ENCODE measurements at regions of chr14 and their contacts with region 1.

Region 1: DNA sequence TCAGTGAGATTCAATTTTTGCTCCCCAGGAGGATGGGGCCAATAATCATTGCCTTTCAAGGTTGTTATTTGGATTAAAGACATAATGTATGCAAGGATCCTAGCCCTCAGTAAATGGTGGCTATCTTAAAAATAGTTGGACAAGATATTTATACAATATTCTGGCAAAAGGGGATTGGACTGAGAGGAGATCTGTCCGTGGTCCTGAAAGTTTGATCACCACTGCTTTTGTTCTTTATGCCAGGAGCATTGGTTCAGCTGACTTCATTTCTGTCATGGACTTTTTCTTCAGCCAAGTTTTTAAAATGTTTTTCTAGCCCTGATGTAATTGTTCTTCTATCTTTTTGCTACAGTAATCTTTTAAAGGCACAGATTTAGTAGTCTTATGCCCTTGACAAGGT is 70.2 kb upstream of the TCL1A start:
- DNase-seq: peak in 1 of 9 donors; percentile 3
- ATAC-seq: no peak
- H3K4me3 ChIP-seq: no peak overlapping the region
- H3K4me3 Mint-ChIP-seq: no peak overlapping the region
- H3K27ac ChIP-seq: no peak overlapping the region
- H3K27ac Mint-ChIP-seq: no peak overlapping the region
- H3K4me1 ChIP-seq: no peaks in the 10 kb centered on the region
- H3K4me1 Mint-ChIP-seq: peaks cover 0 to 1% (median 0%) of the 10 kb centered on the region in 7 donors
- H3K27me3 ChIP-seq: no peaks in the 10 kb centered on the region
- H3K27me3 Mint-ChIP-seq: peaks cover 0 to 30% (median 20%) of the 10 kb centered on the region in 5 donors

Region 2: DNA sequence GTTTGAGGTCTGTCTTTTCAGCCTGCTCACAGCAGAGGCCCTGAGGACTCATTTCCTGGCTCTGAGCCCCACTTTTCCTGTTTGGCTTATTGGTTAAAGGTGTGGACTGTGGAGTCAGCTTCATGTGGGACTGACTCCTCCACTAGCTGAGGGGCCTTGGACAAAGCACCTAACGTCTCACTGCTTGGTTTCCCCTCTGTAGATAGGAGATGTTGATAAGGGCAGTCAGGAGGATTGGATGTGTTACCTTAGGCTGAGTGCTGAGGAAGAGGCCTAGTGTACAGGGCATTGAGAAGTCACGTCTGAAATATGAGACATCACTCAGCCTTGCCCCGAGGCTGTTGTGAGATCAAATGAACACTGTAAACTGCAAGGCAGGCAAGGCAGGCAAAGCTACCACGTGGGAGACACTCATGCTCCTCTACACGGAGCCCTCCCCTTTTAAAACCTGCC is 43.1 kb before region 1 on chr14:
- CTCF ChIA-PET with region 1: no interaction called
- POLR2A ChIA-PET with region 1: no interaction called
- intact Hi-C with region 1: no loop called
- DNase-seq: no peak
- ATAC-seq: no peak
- H3K4me3 ChIP-seq: no peak overlapping the region
- H3K4me3 Mint-ChIP-seq: no peak overlapping the region
- H3K27ac ChIP-seq: no peak overlapping the region
- H3K27ac Mint-ChIP-seq: no peak overlapping the region
- H3K4me1 ChIP-seq: peaks cover 0 to 10% of the 10 kb centered on the region in 2 donors
- H3K4me1 Mint-ChIP-seq: peaks cover 5 to 17% (median 11%) of the 10 kb centered on the region in 7 donors
- H3K27me3 ChIP-seq: no peaks in the 10 kb centered on the region
- H3K27me3 Mint-ChIP-seq: peaks cover 0 to 8% (median 0%) of the 10 kb centered on the region in 5 donors

Region 3: GRCh38 chr14:95814363-95815225 is 30.5 kb after region 1 on chr14:
- CTCF ChIA-PET with region 1: no interaction called
- POLR2A ChIA-PET with region 1: no interaction called
- intact Hi-C with region 1: no loop called
- DNase-seq: no peak
- ATAC-seq: no peak
- H3K4me3 ChIP-seq: no peak overlapping the region
- H3K4me3 Mint-ChIP-seq: no peak overlapping the region
- H3K27ac ChIP-seq: no peak overlapping the region
- H3K27ac Mint-ChIP-seq: no peak overlapping the region
- H3K4me1 ChIP-seq: no peaks in the 10 kb centered on the region
- H3K4me1 Mint-ChIP-seq: peaks cover 0 to 1% (median 0%) of the 10 kb centered on the region in 7 donors
- H3K27me3 ChIP-seq: peaks cover 0 to 5% of the 10 kb centered on the region in 2 donors
- H3K27me3 Mint-ChIP-seq: peaks cover 19 to 85% (median 54%) of the 10 kb centered on the region in 5 donors

Region 4: GRCh38 chr14:95833429-95833828 is 49.3 kb after region 1 on chr14:
- CTCF ChIA-PET with region 1: no interaction called
- POLR2A ChIA-PET with region 1: no interaction called
- intact Hi-C with region 1: no loop called
- DNase-seq: no peak
- ATAC-seq: no peak
- H3K4me3 ChIP-seq: no peak overlapping the region
- H3K4me3 Mint-ChIP-seq: no peak overlapping the region
- H3K27ac ChIP-seq: no peak overlapping the region
- H3K27ac Mint-ChIP-seq: no peak overlapping the region
- H3K4me1 ChIP-seq: no peaks in the 10 kb centered on the region
- H3K4me1 Mint-ChIP-seq: peaks cover 0 to 8% (median 0%) of the 10 kb centered on the region in 7 donors
- H3K27me3 ChIP-seq: no peaks in the 10 kb centered on the region
- H3K27me3 Mint-ChIP-seq: peaks cover 0 to 49% (median 31%) of the 10 kb centered on the region in 5 donors

Region 5: DNA sequence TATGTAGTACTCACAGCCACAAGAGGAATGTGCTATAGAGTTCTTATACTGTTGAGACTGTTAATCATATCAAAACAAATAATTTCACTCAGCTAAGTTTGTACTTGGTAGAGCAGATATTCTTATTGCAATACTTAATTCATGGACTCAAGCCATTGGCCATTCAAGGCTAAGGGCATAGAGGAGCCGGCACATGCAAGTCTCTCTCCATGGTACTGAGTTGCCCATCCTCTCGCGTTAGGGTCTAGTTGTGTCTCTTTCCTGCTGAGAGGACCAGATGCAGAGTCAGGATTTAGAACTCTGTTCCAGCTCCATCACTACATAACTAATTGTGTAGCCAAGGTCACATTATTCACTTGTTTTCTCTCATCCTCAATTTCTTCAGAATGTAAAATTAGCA is 78.1 kb after region 1 on chr14:
- CTCF ChIA-PET with region 1: no interaction called
- POLR2A ChIA-PET with region 1: no interaction called
- intact Hi-C with region 1: no loop called
- DNase-seq: no peak
- ATAC-seq: no peak
- H3K4me3 ChIP-seq: no peak overlapping the region
- H3K4me3 Mint-ChIP-seq: no peak overlapping the region
- H3K27ac ChIP-seq: no peak overlapping the region
- H3K27ac Mint-ChIP-seq: no peak overlapping the region
- H3K4me1 ChIP-seq: no peaks in the 10 kb centered on the region
- H3K4me1 Mint-ChIP-seq: no peaks in the 10 kb centered on the region
- H3K27me3 ChIP-seq: no peaks in the 10 kb centered on the region
- H3K27me3 Mint-ChIP-seq: peaks cover 4 to 55% (median 31%) of the 10 kb centered on the region in 5 donors

Region 6: DNA sequence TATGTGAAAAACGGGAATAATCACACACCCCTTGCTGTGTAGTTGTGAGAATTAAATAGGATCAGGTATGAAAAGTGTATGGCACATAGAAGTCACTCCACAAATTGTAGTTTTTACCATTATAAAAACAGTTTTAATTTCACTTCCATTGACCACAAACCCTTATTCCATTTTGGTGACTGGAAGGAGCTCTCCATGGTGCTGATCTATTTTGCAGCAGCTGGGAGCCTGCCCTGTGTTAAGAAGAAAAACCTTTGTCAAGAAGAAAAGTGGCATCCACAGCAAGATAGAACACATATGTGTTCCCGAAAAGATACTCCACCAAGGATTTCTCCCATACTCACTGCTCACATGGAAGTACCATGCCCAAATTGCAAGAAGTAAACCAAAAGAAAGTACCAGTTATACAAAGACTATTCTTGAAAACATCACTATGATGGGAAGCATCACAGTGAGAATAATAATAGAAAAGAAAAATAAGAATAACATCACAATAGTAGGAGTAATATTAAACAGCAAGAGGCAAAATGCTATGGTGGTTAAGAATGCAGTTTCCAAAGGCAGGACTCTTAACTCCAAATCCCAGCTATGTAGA is 151.2 kb after region 1 on chr14:
- CTCF ChIA-PET with region 1: no interaction called
- POLR2A ChIA-PET with region 1: no interaction called
- intact Hi-C with region 1: loop called in 1 of 2 experiments (anchors 5 kb)
- DNase-seq: peak in 5 of 9 donors; percentile 2 to 26 (median 9)
- ATAC-seq: no peak
- H3K4me3 ChIP-seq: no peak overlapping the region
- H3K4me3 Mint-ChIP-seq: no peak overlapping the region
- H3K27ac ChIP-seq: no peak overlapping the region
- H3K27ac Mint-ChIP-seq: no peak overlapping the region
- H3K4me1 ChIP-seq: no peaks in the 10 kb centered on the region
- H3K4me1 Mint-ChIP-seq: no peaks in the 10 kb centered on the region
- H3K27me3 ChIP-seq: no peaks in the 10 kb centered on the region
- H3K27me3 Mint-ChIP-seq: peaks cover 0 to 33% (median 24%) of the 10 kb centered on the region in 5 donors